ENCODE measurements at regions of chr6 and their contacts with region 1.

Region 1: DNA sequence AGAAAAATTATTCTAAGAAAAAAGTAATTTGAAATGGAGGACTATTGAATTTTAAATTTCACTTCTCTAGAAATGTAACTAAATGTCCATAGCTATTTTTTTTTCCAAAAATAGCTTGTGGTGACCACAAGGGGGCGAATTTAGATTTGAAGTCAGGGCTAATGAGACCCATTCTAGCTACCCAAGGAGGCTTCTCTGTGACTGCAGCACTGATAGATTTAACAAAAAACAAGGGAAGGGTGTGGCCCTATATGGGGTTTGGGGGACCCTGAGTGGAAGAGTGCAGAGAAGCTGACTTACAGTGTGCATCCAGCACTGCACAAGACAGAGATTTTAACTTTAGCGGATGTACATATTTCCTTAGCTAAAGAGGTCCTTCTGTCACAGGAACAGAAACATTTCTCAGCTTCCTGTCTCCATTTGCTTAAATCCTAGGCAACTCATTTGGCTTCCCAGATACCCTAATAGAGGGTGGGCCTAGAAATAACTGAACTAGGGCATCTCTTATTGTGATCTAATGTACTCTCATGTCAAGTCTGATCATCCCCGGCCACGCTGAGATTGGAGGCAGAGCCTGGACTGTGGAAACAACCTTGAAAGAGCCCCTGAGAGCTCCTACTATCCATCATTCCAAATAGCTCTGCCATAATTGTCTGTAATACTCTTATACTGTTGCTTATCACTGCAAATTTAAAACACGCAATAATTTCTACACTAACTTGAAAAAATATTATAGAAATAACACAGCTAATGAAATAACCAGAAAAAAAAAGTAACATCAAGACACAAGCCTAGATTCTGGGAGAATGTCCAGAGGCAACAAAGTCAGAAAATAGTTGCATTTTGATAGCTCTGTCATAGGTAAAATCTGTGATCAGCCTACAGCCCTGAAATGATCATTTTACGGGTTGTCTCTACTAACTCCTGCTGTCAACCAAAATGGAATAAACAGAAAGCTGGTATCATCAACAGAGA is 93.6 kb downstream of the SNAP91 start:
- DNase-seq: peak in 1 of 35 experiments; percentile 13
- ATAC-seq: no peak
- H3K4me3 ChIP-seq: no peak overlapping the region
- H3K4me3 Mint-ChIP-seq: no peak overlapping the region
- H3K27ac ChIP-seq: no peak overlapping the region
- H3K27ac Mint-ChIP-seq: no peak overlapping the region
- H3K4me1 ChIP-seq: no peaks in the 10 kb centered on the region
- H3K4me1 Mint-ChIP-seq: no peaks in the 10 kb centered on the region
- H3K27me3 ChIP-seq: no peaks in the 10 kb centered on the region
- H3K27me3 Mint-ChIP-seq: no peaks in the 10 kb centered on the region

Region 2: DNA sequence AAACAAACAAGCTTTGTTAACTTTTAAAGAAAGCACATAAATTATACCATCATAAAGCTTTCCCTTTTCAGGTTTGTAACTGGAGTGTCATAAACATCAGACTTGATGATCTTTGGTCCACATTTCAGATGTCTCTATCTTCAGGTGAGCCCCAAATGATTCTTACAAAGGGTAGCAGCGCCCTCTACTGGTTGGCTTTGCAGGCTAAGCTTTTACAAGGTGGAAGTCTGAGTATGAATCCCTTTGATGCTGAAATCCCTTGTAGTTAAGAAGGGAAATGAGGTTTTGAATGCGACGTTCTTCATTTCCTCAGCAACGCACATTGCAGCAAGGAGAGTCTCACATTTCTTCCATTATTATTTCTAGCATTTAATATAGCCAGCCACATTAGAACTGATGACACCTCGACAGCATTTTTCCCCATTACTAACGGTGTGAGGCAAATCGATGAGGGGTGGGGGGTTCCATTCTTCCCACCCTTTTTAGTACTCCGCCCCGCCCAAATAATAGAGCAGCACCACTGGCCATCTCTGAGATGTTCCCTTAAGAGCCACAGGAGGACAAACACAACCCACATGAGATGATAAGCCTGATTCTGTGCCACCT is 1708.2 kb after region 1 on chr6:
- CTCF ChIA-PET with region 1: interaction called, 7 to 11 read pairs
- POLR2A ChIA-PET with region 1: no interaction called
- DNase-seq: peak; percentile 18 to 76 (median 58)
- ATAC-seq: peak in 3 of 4 experiments; percentile 27 to 75 (median 56)
- H3K4me3 ChIP-seq: no peak overlapping the region
- H3K4me3 Mint-ChIP-seq: no peak overlapping the region
- H3K27ac ChIP-seq: no peak overlapping the region
- H3K27ac Mint-ChIP-seq: no peak overlapping the region
- H3K4me1 ChIP-seq: no peaks in the 10 kb centered on the region
- H3K4me1 Mint-ChIP-seq: peaks cover 0 to 9% (median 4%) of the 10 kb centered on the region in 3 donors
- H3K27me3 ChIP-seq: peaks cover 0 to 8% of the 10 kb centered on the region in 2 experiments
- H3K27me3 Mint-ChIP-seq: peaks cover 11 to 16% of the 10 kb centered on the region in 2 donors

Measured in T-cell (primary cell).